CD8-positive, alpha-beta T cell (primary cell): ENCODE measurements at regions of chr15 and their contacts with region 1.

Region 1: GRCh38 chr15:38563723-38564519 is 693 bp downstream of the RASGRP1 start:
- DNase-seq: peak; percentile 79 to 94 (median 89)
- ATAC-seq: peak; percentile 61
- H3K4me3 ChIP-seq: peak overlapping the region; percentile 90 to 96
- H3K4me3 Mint-ChIP-seq: peak overlapping the region; percentile 98
- H3K27ac ChIP-seq: peak overlapping the region; percentile 78 to 79
- H3K27ac Mint-ChIP-seq: peak overlapping the region; percentile 95
- H3K4me1 ChIP-seq: peaks cover 56% of the 10 kb centered on the region
- H3K4me1 Mint-ChIP-seq: peaks cover 66% of the 10 kb centered on the region
- H3K27me3 ChIP-seq: no peaks in the 10 kb centered on the region
- H3K27me3 Mint-ChIP-seq: no peaks in the 10 kb centered on the region
- CTCF ChIP-seq: peak; percentile 98

Region 2: GRCh38 chr15:38508647-38509046 is 55.3 kb before region 1 on chr15:
- CTCF ChIA-PET with region 1: interaction called, 11 read pairs
- POLR2A ChIA-PET with region 1: interaction called, 3 read pairs
- intact Hi-C with region 1: no loop called
- DNase-seq: no peak
- ATAC-seq: no peak
- H3K4me3 ChIP-seq: no peak overlapping the region
- H3K4me3 Mint-ChIP-seq: no peak overlapping the region
- H3K27ac ChIP-seq: peak overlapping the region in 1 of 2 experiments; percentile 17
- H3K27ac Mint-ChIP-seq: peak overlapping the region; percentile 80
- H3K4me1 ChIP-seq: no peaks in the 10 kb centered on the region
- H3K4me1 Mint-ChIP-seq: peaks cover 10% of the 10 kb centered on the region
- H3K27me3 ChIP-seq: no peaks in the 10 kb centered on the region
- H3K27me3 Mint-ChIP-seq: no peaks in the 10 kb centered on the region
- CTCF ChIP-seq: no peak

Region 3: GRCh38 chr15:38547255-38547997 is 16.5 kb before region 1 on chr15:
- CTCF ChIA-PET with region 1: interaction called, 45 read pairs
- POLR2A ChIA-PET with region 1: interaction called, 6 read pairs
- intact Hi-C with region 1: no loop called
- DNase-seq: peak in 1 of 9 experiments; percentile 44
- ATAC-seq: no peak
- H3K4me3 ChIP-seq: no peak overlapping the region
- H3K4me3 Mint-ChIP-seq: no peak overlapping the region
- H3K27ac ChIP-seq: peak overlapping the region in 1 of 2 experiments; percentile 25
- H3K27ac Mint-ChIP-seq: peak overlapping the region; percentile 68
- H3K4me1 ChIP-seq: peaks cover 77% of the 10 kb centered on the region
- H3K4me1 Mint-ChIP-seq: peaks cover 82% of the 10 kb centered on the region
- H3K27me3 ChIP-seq: no peaks in the 10 kb centered on the region
- H3K27me3 Mint-ChIP-seq: no peaks in the 10 kb centered on the region
- CTCF ChIP-seq: no peak

Region 4: GRCh38 chr15:38624244-38625205 is 60.6 kb after region 1 on chr15:
- CTCF ChIA-PET with region 1: interaction called, 12 read pairs
- POLR2A ChIA-PET with region 1: interaction called, 3 read pairs
- intact Hi-C with region 1: no loop called
- DNase-seq: no peak
- ATAC-seq: no peak
- H3K4me3 ChIP-seq: no peak overlapping the region
- H3K4me3 Mint-ChIP-seq: no peak overlapping the region
- H3K27ac ChIP-seq: no peak overlapping the region
- H3K27ac Mint-ChIP-seq: no peak overlapping the region
- H3K4me1 ChIP-seq: peaks cover 21% of the 10 kb centered on the region
- H3K4me1 Mint-ChIP-seq: peaks cover 33% of the 10 kb centered on the region
- H3K27me3 ChIP-seq: no peaks in the 10 kb centered on the region
- H3K27me3 Mint-ChIP-seq: no peaks in the 10 kb centered on the region
- CTCF ChIP-seq: no peak

Region 5: DNA sequence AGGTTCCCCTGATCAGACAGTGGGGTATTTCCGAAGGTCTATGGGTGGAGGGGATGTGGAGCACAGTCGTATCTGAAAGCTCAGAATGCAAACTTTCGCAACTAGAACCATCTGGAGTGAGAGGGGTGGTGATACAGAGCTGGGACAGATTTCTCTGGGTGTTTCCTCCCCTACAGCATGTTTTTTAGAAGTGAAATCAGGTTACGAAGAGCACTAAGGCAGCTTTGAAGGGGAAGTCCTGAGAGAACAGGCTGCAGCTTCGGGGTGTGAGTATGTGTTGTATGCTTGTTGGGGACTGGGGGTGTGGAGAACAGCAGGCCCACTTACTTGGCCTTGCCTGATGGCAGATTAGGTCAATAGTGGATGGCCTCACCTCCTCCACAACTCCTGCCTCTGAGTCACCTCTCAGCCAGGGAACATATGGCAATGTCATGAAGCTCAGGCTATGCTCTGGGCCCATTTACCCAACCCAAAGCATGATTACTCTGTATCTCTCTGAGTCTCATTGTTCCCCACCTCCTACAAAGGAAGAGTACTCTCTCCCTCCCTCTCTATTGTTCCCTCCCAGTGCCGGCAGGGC is 107.8 kb after region 1 on chr15:
- CTCF ChIA-PET with region 1: interaction called, 396 read pairs
- POLR2A ChIA-PET with region 1: interaction called, 34 read pairs
- intact Hi-C with region 1: loop called (anchors 1 kb)
- DNase-seq: peak in 6 of 9 experiments; percentile 39 to 91 (median 64)
- ATAC-seq: peak; percentile 61
- H3K4me3 ChIP-seq: peak overlapping the region in 1 of 2 experiments; percentile 3
- H3K4me3 Mint-ChIP-seq: peak overlapping the region; percentile 61
- H3K27ac ChIP-seq: peak overlapping the region; percentile 70 to 84
- H3K27ac Mint-ChIP-seq: peak overlapping the region; percentile 97
- H3K4me1 ChIP-seq: peaks cover 77% of the 10 kb centered on the region
- H3K4me1 Mint-ChIP-seq: peaks cover 77% of the 10 kb centered on the region
- H3K27me3 ChIP-seq: no peaks in the 10 kb centered on the region
- H3K27me3 Mint-ChIP-seq: no peaks in the 10 kb centered on the region
- CTCF ChIP-seq: no peak

Region 6: DNA sequence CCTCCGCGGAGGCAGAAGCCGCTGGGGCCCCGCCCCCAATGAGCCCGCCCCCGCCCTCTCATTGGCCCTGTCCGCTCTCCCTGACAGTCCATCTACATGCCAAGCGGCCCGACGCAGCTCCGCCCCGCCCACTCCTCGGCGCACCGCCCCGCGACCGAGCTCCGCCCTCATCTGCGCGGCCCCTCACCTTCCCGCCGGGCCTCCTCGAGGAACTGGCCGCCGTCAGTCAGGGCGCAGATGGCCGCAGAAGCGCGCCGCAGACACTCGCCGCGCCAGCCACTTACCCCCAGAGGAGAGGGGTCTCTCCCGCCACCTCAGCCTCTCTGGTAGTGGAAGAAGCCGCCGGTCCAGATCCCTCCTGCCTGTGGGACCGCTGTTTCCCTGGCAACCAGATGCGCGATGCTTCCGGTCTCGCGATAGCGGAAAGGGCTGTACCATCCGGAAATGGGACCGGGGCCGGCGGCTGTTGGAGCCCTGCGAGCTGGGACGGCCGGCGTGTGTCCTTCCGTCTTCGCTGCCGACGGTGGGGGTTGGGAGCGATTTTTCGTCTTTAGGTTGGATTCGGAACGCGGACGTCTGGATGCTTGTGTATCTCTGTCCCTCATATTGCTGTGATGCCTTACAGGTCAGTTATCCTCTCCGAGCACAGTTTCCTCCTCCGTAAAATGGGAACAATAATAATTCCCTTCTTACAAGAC is 1218.7 kb after region 1 on chr15 and contains the start of gene FSIP1:
- CTCF ChIA-PET with region 1: no interaction called
- POLR2A ChIA-PET with region 1: no interaction called
- intact Hi-C with region 1: loop called in 1 of 2 experiments (anchors 10 kb)
- DNase-seq: peak; percentile 91 to 97 (median 94)
- ATAC-seq: peak; percentile 98
- H3K4me3 ChIP-seq: peak within 1 kb of the TSS; percentile 71 to 95
- H3K4me3 Mint-ChIP-seq: peak within 1 kb of the TSS; percentile 85
- H3K27ac ChIP-seq: peak within 1 kb of the TSS; percentile 68 to 82
- H3K27ac Mint-ChIP-seq: peak within 1 kb of the TSS; percentile 87
- H3K4me1 ChIP-seq: peaks cover 20% of the 10 kb centered on the region
- H3K4me1 Mint-ChIP-seq: peaks cover 50% of the 10 kb centered on the region
- H3K27me3 ChIP-seq: no peaks in the 10 kb centered on the region
- H3K27me3 Mint-ChIP-seq: no peaks in the 10 kb centered on the region
- CTCF ChIP-seq: no peak
- total RNA-seq, gene FSIP1: 0.22 to 0.64 TPM